OCI-LY7 (cell line): ENCODE measurements at regions of chr12 and their contacts with region 1.

Region 1: DNA sequence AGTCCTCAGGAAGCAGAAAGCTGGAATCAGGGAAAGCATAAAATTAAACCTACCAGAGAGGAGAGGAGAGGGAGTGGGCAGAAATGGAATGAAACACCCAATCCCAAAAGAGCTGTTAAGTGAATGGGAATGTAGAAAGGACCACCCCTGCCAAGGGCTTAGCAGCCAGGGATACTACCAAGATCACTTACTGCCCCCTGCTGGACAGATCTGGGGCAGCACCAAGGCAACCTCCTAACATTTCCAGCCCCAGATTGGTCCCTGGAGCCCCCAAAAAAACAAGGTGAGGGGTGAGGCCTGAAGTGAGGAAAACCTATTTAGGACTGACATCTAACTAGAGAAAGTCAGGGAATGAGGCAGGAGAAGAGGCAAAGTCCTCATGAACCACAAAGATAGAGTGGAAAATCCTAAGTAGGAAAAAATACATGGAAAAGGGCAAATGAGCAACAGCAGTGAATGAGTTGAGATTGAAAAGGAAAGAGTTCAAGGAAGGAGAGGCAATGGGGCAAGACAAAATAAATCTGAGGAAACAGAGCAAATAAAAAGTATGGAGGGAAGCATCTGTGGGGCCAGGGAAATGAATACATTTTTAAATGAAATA is 11.2 kb upstream of the FKBP11 start:
- DNase-seq: peak; percentile 74
- H3K4me3 ChIP-seq: no peak overlapping the region
- H3K27ac ChIP-seq: no peak overlapping the region
- H3K4me1 ChIP-seq: no peaks in the 10 kb centered on the region
- CTCF ChIP-seq: peak; percentile 98

Region 2: GRCh38 chr12:48977315-48978281 is 41.1 kb after region 1 on chr12:
- CTCF ChIA-PET with region 1: no interaction called
- POLR2A ChIA-PET with region 1: no interaction called
- intact Hi-C with region 1: loop called (anchors 2 kb)
- DNase-seq: peak; percentile 78
- H3K4me3 ChIP-seq: no peak overlapping the region
- H3K27ac ChIP-seq: no peak overlapping the region
- H3K4me1 ChIP-seq: peaks cover 6% of the 10 kb centered on the region
- CTCF ChIP-seq: peak; percentile 81